CD4-positive, alpha-beta memory T cell (primary cell): ENCODE measurements at regions of chr16 and their contacts with region 1.

Region 1: GRCh38 chr16:22297114-22297878 is at the start of gene POLR3E:
- DNase-seq: peak; percentile 98 to 100 (median 100)
- H3K4me3 ChIP-seq: peak within 1 kb of the TSS; percentile 76 to 91
- H3K4me3 Mint-ChIP-seq: peak within 1 kb of the TSS; percentile 89 to 97 (median 94)
- H3K27ac ChIP-seq: peak within 1 kb of the TSS; percentile 99
- H3K27ac Mint-ChIP-seq: peak within 1 kb of the TSS; percentile 97 to 100 (median 99)
- H3K4me1 ChIP-seq: peaks cover 37% of the 10 kb centered on the region
- H3K4me1 Mint-ChIP-seq: peaks cover 27 to 50% (median 39%) of the 10 kb centered on the region in 4 donors
- H3K27me3 ChIP-seq: no peaks in the 10 kb centered on the region
- H3K27me3 Mint-ChIP-seq: peaks cover 0 to 4% of the 10 kb centered on the region in 2 donors
- total RNA-seq, gene POLR3E: 88.4 to 94.0 TPM

Region 2: GRCh38 chr16:21952793-21953540 is 344.3 kb before region 1 on chr16 and contains the start of gene UQCRC2:
- CTCF ChIA-PET with region 1: interaction called, 5 read pairs
- POLR2A ChIA-PET with region 1: interaction called, 18 read pairs
- intact Hi-C with region 1: no loop called
- DNase-seq: peak; percentile 90 to 94 (median 92)
- H3K4me3 ChIP-seq: peak within 1 kb of the TSS; percentile 98
- H3K4me3 Mint-ChIP-seq: peak within 1 kb of the TSS; percentile 96 to 100 (median 98)
- H3K27ac ChIP-seq: peak within 1 kb of the TSS; percentile 98
- H3K27ac Mint-ChIP-seq: peak within 1 kb of the TSS; percentile 95 to 100 (median 99)
- H3K4me1 ChIP-seq: peaks cover 53% of the 10 kb centered on the region
- H3K4me1 Mint-ChIP-seq: peaks cover 36 to 82% (median 59%) of the 10 kb centered on the region in 4 donors
- H3K27me3 ChIP-seq: no peaks in the 10 kb centered on the region
- H3K27me3 Mint-ChIP-seq: no peaks in the 10 kb centered on the region
- total RNA-seq, gene UQCRC2: 170 to 177 TPM

Region 3: GRCh38 chr16:22001591-22001990 is 295.7 kb before region 1 on chr16:
- CTCF ChIA-PET with region 1: interaction called, 20 read pairs
- POLR2A ChIA-PET with region 1: interaction called, 16 read pairs
- intact Hi-C with region 1: loop called (anchors 2 kb)
- DNase-seq: no peak
- H3K4me3 ChIP-seq: no peak overlapping the region
- H3K4me3 Mint-ChIP-seq: no peak overlapping the region
- H3K27ac ChIP-seq: no peak overlapping the region
- H3K27ac Mint-ChIP-seq: no peak overlapping the region
- H3K4me1 ChIP-seq: peaks cover 9% of the 10 kb centered on the region
- H3K4me1 Mint-ChIP-seq: peaks cover 4 to 18% (median 13%) of the 10 kb centered on the region in 4 donors
- H3K27me3 ChIP-seq: no peaks in the 10 kb centered on the region
- H3K27me3 Mint-ChIP-seq: no peaks in the 10 kb centered on the region

Region 4: GRCh38 chr16:22007509-22008214 is 289.6 kb before region 1 on chr16 and contains the start of gene MOSMO:
- CTCF ChIA-PET with region 1: interaction called, 20 read pairs
- POLR2A ChIA-PET with region 1: interaction called, 16 read pairs
- intact Hi-C with region 1: no loop called
- DNase-seq: peak; percentile 65 to 73 (median 66)
- H3K4me3 ChIP-seq: peak within 1 kb of the TSS; percentile 12 to 74
- H3K4me3 Mint-ChIP-seq: peak within 1 kb of the TSS; percentile 86 to 93 (median 90)
- H3K27ac ChIP-seq: peak within 1 kb of the TSS; percentile 78
- H3K27ac Mint-ChIP-seq: peak within 1 kb of the TSS; percentile 61 to 97 (median 87)
- H3K4me1 ChIP-seq: peaks cover 41% of the 10 kb centered on the region
- H3K4me1 Mint-ChIP-seq: peaks cover 32 to 54% (median 40%) of the 10 kb centered on the region in 4 donors
- H3K27me3 ChIP-seq: no peaks in the 10 kb centered on the region
- H3K27me3 Mint-ChIP-seq: no peaks in the 10 kb centered on the region
- total RNA-seq, gene MOSMO: 21.9 to 23.4 TPM

Region 5: GRCh38 chr16:22206013-22206841 is 91.1 kb before region 1 on chr16 and contains the start of gene EEF2K:
- CTCF ChIA-PET with region 1: interaction called, 89 read pairs
- POLR2A ChIA-PET with region 1: interaction called, 34 read pairs
- intact Hi-C with region 1: loop called (anchors 1 kb)
- DNase-seq: peak; percentile 64 to 80 (median 74)
- H3K4me3 ChIP-seq: peak within 1 kb of the TSS; percentile 76 to 78
- H3K4me3 Mint-ChIP-seq: peak within 1 kb of the TSS; percentile 91 to 97 (median 93)
- H3K27ac ChIP-seq: peak within 1 kb of the TSS; percentile 68
- H3K27ac Mint-ChIP-seq: peak within 1 kb of the TSS; percentile 81 to 95 (median 89)
- H3K4me1 ChIP-seq: peaks cover 14% of the 10 kb centered on the region
- H3K4me1 Mint-ChIP-seq: peaks cover 16 to 33% (median 25%) of the 10 kb centered on the region in 4 donors
- H3K27me3 ChIP-seq: no peaks in the 10 kb centered on the region
- H3K27me3 Mint-ChIP-seq: no peaks in the 10 kb centered on the region
- total RNA-seq, gene EEF2K: 19.1 to 20.7 TPM

Region 6: GRCh38 chr16:22321339-22322001 is 24.2 kb after region 1 on chr16:
- CTCF ChIA-PET with region 1: interaction called, 10 read pairs
- POLR2A ChIA-PET with region 1: interaction called, 3 read pairs
- intact Hi-C with region 1: no loop called
- DNase-seq: peak; percentile 73 to 78 (median 74)
- H3K4me3 ChIP-seq: no peak overlapping the region
- H3K4me3 Mint-ChIP-seq: peak overlapping the region in 3 of 8 donors; percentile 22 to 62 (median 26)
- H3K27ac ChIP-seq: no peak overlapping the region
- H3K27ac Mint-ChIP-seq: peak overlapping the region in 6 of 7 donors; percentile 58 to 92 (median 74)
- H3K4me1 ChIP-seq: peaks cover 5% of the 10 kb centered on the region
- H3K4me1 Mint-ChIP-seq: peaks cover 4 to 10% (median 6%) of the 10 kb centered on the region in 4 donors
- H3K27me3 ChIP-seq: no peaks in the 10 kb centered on the region
- H3K27me3 Mint-ChIP-seq: no peaks in the 10 kb centered on the region